ENCODE measurements at regions of chr4 and their contacts with region 1.

Region 1: DNA sequence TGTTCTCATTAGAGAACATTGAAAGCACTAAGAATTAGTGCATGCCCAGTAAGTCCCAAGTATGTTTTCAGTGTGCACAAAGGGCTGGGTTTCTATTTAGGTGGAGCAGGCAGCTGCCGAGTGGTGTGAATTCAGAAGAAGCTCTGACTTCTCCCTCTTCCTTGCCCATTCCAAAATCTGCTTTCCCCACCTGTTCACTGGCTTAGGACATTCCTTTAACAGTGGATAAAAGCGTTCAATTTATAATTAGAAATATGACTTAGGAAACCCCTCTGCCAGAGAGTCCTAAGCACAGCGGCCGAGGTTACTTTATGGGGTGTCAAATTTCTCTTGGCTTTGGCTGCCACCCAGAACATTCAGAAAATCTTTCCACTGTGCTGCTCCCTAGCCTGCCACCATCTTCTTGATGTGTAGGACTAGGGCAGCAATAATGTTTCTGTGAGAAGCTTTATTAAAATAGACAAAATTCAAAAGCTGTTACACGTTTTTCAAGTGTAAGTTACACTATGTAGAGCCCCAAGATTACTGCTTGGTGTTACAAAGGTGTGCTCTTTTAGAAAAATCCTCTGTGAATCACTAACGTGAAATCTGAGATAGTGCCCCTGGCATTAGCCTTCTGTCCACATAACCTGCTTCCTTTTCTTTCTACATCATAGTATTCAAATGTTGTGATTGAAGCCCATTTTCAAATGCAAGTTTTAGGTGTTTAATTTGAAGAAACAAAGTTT is 191.6 kb upstream of the ANKRD50 start:
- DNase-seq: peak; percentile 71
- ATAC-seq: peak; percentile 86
- H3K4me3 ChIP-seq: peak overlapping the region; percentile 41
- H3K27ac ChIP-seq: peak overlapping the region; percentile 78
- H3K4me1 ChIP-seq: peaks cover 28% of the 10 kb centered on the region
- H3K27me3 ChIP-seq: no peaks in the 10 kb centered on the region
- CTCF ChIP-seq: no peak

Region 2: DNA sequence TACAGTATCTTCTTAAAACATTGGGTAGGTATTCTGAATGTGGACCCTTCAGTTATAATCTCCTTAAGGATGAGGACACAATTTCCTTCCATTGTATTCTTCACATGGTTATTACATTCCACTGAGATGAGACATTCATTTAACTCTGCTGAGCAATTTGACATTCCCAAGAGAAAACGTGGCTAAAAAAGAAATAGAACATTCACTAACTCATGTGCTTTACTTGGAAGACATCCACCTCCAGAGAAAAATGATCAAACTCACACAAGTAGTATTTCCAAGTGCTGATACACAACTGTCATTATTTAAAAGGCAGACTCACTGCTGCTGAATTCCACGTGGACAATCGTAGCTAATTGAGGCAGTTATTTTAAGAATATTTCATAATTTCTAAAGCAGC is 36.2 kb after region 1 on chr4:
- CTCF ChIA-PET with region 1: no interaction called
- POLR2A ChIA-PET with region 1: no interaction called
- intact Hi-C with region 1: loop called (anchors 2 kb)
- DNase-seq: peak; percentile 88
- ATAC-seq: peak; percentile 37
- H3K4me3 ChIP-seq: no peak overlapping the region
- H3K27ac ChIP-seq: peak overlapping the region; percentile 98
- H3K4me1 ChIP-seq: peaks cover 66% of the 10 kb centered on the region
- H3K27me3 ChIP-seq: no peaks in the 10 kb centered on the region
- CTCF ChIP-seq: no peak

Region 3: DNA sequence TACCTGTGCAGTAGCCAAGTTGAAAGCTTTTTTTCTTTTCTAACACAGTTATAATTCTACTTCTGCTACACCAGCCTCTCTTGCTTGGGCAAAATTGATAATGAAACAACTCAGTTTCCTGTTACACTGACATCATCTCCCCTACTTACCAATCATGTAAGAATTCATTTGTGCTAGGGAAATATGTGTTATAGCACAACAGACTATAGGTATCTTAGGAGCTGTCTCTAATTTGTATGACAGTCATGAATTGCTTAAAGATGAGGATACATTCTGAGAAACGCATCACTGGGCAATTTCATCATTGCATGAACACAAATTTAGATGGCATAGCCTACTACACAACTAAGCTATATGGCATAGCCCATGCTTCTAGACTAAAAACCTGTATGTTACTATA is 54.7 kb after region 1 on chr4:
- CTCF ChIA-PET with region 1: no interaction called
- POLR2A ChIA-PET with region 1: no interaction called
- intact Hi-C with region 1: no loop called
- DNase-seq: no peak
- ATAC-seq: no peak
- H3K4me3 ChIP-seq: no peak overlapping the region
- H3K27ac ChIP-seq: no peak overlapping the region
- H3K4me1 ChIP-seq: no peaks in the 10 kb centered on the region
- H3K27me3 ChIP-seq: no peaks in the 10 kb centered on the region
- CTCF ChIP-seq: no peak

Measured in PC-3 (cell line).